ENCODE measurements at regions of chr6 and their contacts with region 1.

Region 1: GRCh38 chr6:3118353-3119039 is at the start of gene BPHL:
- H3K4me3 Mint-ChIP-seq: peak within 1 kb of the TSS; percentile 85
- H3K27ac Mint-ChIP-seq: peak within 1 kb of the TSS; percentile 94
- H3K4me1 Mint-ChIP-seq: peaks cover 17% of the 10 kb centered on the region
- H3K27me3 Mint-ChIP-seq: peaks cover 5% of the 10 kb centered on the region

Region 2: GRCh38 chr6:2971420-2972218 is 146.9 kb before region 1 on chr6 and contains the start of gene SERPINB6:
- intact Hi-C with region 1: no loop called
- H3K4me3 Mint-ChIP-seq: peak within 1 kb of the TSS; percentile 91
- H3K27ac Mint-ChIP-seq: peak within 1 kb of the TSS; percentile 96
- H3K4me1 Mint-ChIP-seq: peaks cover 39% of the 10 kb centered on the region
- H3K27me3 Mint-ChIP-seq: no peaks in the 10 kb centered on the region

Region 3: GRCh38 chr6:3068329-3069214 is 49.9 kb before region 1 on chr6 and contains the start of gene RIPK1:
- intact Hi-C with region 1: loop called (anchors 2 kb)
- H3K4me3 Mint-ChIP-seq: peak within 1 kb of the TSS; percentile 98
- H3K27ac Mint-ChIP-seq: peak within 1 kb of the TSS; percentile 96
- H3K4me1 Mint-ChIP-seq: peaks cover 48% of the 10 kb centered on the region
- H3K27me3 Mint-ChIP-seq: peaks cover 2% of the 10 kb centered on the region

Region 4: DNA sequence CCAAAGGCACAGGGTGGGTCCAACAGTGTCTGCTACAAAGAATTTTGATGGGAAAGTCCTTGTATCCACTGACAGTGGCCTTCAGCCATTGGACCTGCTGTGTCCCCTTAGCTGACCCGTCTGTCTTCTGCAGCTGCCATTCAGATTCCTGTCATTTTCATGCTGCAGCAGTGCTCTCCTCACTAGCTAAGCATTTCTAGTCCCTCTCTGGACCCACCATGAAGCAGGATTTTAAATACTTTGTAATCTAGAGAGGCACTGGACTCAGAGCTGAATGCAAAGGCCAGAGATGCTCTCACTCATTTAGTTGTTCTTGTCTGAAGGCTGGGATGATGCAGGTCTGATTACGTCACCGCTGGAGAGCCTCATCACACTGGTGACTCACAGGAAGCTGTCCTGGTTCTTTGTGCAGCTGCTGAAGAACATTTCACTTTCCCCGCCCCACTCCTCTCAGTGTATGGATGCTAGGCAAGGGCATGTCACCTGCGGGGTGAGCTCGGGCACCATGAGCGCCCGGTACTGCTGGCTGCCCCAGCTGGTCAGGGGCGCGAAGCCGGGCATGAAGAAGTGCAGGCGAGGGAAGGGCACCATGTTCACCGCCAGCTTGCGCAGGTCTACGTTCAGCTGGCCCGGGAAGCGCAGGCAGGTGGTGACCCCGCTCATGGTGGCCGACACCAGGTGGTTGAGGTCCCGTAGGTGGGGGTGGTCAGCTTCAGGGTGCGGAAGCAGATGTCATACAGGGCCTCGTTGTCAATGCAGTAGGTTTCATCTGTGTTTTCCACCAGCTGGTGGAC is 58.3 kb after region 1 on chr6:
- intact Hi-C with region 1: no loop called
- H3K4me3 Mint-ChIP-seq: no peak overlapping the region
- H3K27ac Mint-ChIP-seq: no peak overlapping the region
- H3K4me1 Mint-ChIP-seq: peaks cover 6% of the 10 kb centered on the region
- H3K27me3 Mint-ChIP-seq: peaks cover 25% of the 10 kb centered on the region